Caco-2 (cell line): ENCODE measurements at regions of chr2 and their contacts with region 1.

Region 1: DNA sequence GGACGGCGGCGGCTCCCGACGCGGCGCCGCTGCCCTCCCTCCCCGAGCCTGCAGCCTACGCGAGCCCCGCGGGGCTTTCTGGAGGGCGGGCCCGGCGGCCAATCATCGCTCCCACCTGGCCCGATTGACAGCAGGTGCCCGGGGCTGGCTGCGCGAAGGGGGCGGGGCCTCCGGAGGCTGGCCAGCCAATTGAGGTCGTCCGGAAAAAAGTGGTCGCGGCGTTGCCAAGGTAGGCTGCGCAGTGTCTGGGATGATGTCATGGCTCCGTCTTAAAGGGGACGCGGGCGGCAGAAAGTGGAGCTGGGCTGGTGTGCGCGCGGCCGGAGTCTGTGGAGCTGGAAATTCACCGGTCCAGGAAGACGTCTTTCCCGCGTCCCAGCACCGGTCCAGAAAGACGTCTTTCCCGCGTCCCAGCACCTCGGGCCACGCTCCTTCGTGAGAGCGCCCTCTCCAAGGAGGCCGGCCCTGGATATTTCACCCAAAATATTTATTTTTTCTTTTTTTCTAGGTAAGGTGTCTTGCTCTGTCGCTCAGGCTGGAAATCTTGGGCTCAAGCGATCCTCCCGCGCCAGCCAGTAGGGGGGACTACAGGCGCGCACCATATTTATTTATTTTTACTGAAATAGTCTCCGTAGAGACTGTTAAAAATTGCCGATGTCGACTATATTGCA is at the start of gene ACTR1B:
- DNase-seq: peak; percentile 99
- H3K4me3 ChIP-seq: peak within 1 kb of the TSS; percentile 73
- H3K4me3 Mint-ChIP-seq: peak within 1 kb of the TSS; percentile 94
- H3K27ac Mint-ChIP-seq: peak within 1 kb of the TSS; percentile 98
- H3K4me1 ChIP-seq: peaks cover 6% of the 10 kb centered on the region
- H3K4me1 Mint-ChIP-seq: peaks cover 11% of the 10 kb centered on the region
- H3K27me3 ChIP-seq: no peaks in the 10 kb centered on the region
- H3K27me3 Mint-ChIP-seq: no peaks in the 10 kb centered on the region
- CTCF ChIP-seq: peak; percentile 65 to 75
- total RNA-seq, gene ACTR1B: 41.1 and 42.3 TPM in 2 replicates

Region 2: GRCh38 chr2:97645695-97646629 is 18.1 kb before region 1 on chr2 and contains the start of gene COX5B:
- CTCF ChIA-PET with region 1: interaction called, 14 read pairs
- POLR2A ChIA-PET with region 1: interaction called, 82 read pairs
- intact Hi-C with region 1: loop called (anchors 1 kb)
- DNase-seq: peak; percentile 98 to 99
- H3K4me3 ChIP-seq: peak within 1 kb of the TSS; percentile 88
- H3K4me3 Mint-ChIP-seq: peak within 1 kb of the TSS; percentile 99
- H3K27ac Mint-ChIP-seq: peak within 1 kb of the TSS; percentile 99
- H3K4me1 ChIP-seq: no peaks in the 10 kb centered on the region
- H3K4me1 Mint-ChIP-seq: peaks cover 6% of the 10 kb centered on the region
- H3K27me3 ChIP-seq: no peaks in the 10 kb centered on the region
- H3K27me3 Mint-ChIP-seq: peaks cover 3% of the 10 kb centered on the region
- CTCF ChIP-seq: no peak
- total RNA-seq, gene COX5B: 313 TPM in 2 replicates

Region 3: DNA sequence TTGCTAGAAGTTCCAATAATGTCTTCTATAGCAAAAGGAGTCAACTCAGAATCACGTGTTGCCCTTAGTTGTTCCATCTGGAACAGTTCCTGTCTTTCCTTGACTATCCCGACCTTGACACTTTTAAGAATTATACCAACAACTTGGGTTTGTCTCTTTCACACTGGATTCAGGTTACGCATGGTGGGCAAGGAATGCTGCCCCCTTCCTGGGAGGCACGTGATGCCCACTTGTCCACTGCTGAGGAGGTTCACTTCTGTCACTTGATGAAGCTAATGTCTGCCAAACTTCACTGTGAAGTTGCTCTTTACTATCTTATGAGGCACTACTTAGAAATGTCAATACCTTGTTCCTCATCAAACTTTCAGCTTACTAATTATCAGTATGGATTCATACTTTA is 13.0 kb before region 1 on chr2:
- CTCF ChIA-PET with region 1: interaction called, 14 read pairs
- POLR2A ChIA-PET with region 1: interaction called, 82 read pairs
- intact Hi-C with region 1: no loop called
- DNase-seq: no peak
- H3K4me3 ChIP-seq: no peak overlapping the region
- H3K4me3 Mint-ChIP-seq: no peak overlapping the region
- H3K27ac Mint-ChIP-seq: no peak overlapping the region
- H3K4me1 ChIP-seq: no peaks in the 10 kb centered on the region
- H3K4me1 Mint-ChIP-seq: peaks cover 6% of the 10 kb centered on the region
- H3K27me3 ChIP-seq: no peaks in the 10 kb centered on the region
- H3K27me3 Mint-ChIP-seq: no peaks in the 10 kb centered on the region
- CTCF ChIP-seq: no peak

Region 4: GRCh38 chr2:97691177-97691576 is 27.1 kb after region 1 on chr2:
- CTCF ChIA-PET with region 1: interaction called, 15 read pairs
- POLR2A ChIA-PET with region 1: interaction called, 3 read pairs
- intact Hi-C with region 1: no loop called
- DNase-seq: peak; percentile 25 to 56
- H3K4me3 ChIP-seq: no peak overlapping the region
- H3K4me3 Mint-ChIP-seq: no peak overlapping the region
- H3K27ac Mint-ChIP-seq: no peak overlapping the region
- H3K4me1 ChIP-seq: peaks cover 5% of the 10 kb centered on the region; the same call in 1 of the 2 replicates
- H3K4me1 Mint-ChIP-seq: peaks cover 8% of the 10 kb centered on the region
- H3K27me3 ChIP-seq: no peaks in the 10 kb centered on the region
- H3K27me3 Mint-ChIP-seq: no peaks in the 10 kb centered on the region
- CTCF ChIP-seq: no peak

Region 5: GRCh38 chr2:98012561-98012991 is 348.5 kb after region 1 on chr2:
- CTCF ChIA-PET with region 1: no interaction called
- POLR2A ChIA-PET with region 1: no interaction called
- intact Hi-C with region 1: no loop called
- DNase-seq: no peak
- H3K4me3 ChIP-seq: no peak overlapping the region
- H3K4me3 Mint-ChIP-seq: no peak overlapping the region
- H3K27ac Mint-ChIP-seq: no peak overlapping the region
- H3K4me1 ChIP-seq: no peaks in the 10 kb centered on the region
- H3K4me1 Mint-ChIP-seq: no peaks in the 10 kb centered on the region
- H3K27me3 ChIP-seq: no peaks in the 10 kb centered on the region
- H3K27me3 Mint-ChIP-seq: no peaks in the 10 kb centered on the region
- CTCF ChIP-seq: no peak